Right cardiac atrium (tissue), 5 donors: ENCODE measurements at regions of chr6 and their contacts with region 1.

Region 1: GRCh38 chr6:42726485-42727086 is 4.2 kb upstream of the PRPH2 start:
- DNase-seq: peak; percentile 69 to 87 (median 69)
- ATAC-seq: peak; percentile 94
- H3K4me3 ChIP-seq: peak overlapping the region; percentile 56
- H3K27ac ChIP-seq: peak overlapping the region; percentile 58
- H3K4me1 ChIP-seq: no peaks in the 10 kb centered on the region
- H3K27me3 ChIP-seq: no peaks in the 10 kb centered on the region

Region 2: DNA sequence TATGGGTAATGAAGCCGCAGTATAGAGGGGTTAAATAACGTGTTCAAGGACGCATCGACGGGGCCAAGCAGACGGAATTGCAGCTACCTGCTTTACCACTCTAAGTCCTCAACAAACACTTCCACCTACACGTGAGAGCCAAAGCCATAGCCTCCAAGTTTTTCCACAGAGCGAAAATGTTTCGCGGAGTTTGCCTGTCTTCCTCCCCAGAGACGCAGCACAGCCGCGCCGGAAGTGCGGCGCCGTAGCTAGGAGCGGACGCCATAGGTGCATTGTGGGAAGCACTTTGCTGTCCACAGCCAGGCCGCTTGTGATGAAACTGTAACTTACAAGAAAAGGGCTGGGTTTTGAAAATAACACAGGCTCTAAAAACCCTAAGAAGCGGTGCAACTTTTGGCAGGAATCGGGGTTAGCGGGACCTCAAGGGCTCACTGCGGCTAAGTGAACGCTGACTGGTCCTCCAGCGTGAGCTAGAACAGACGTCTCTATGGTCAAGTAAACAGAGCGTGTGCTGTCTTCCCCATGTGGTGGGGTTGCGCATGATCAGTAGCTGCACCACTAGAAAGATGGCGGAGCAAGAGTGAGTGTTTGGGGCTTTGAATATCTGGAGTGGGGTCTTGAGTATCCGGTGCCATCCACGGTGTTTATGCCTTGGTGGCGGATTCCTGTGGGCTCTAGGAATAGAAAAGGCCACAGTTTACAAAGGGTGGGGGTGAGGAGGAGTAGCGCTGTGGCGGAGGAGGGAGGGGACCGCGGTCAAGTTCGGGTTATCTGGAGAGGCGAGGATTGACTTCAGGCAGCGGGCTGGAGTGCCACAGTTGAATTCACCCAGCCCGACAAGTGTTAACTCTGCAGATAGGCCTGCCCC is 153.0 kb after region 1 on chr6 and contains the start of gene RPL7L1:
- intact Hi-C with region 1: loop called in 1 of 4 experiments (anchors 10 kb)
- DNase-seq: peak; percentile 78 to 93 (median 92)
- ATAC-seq: peak; percentile 98
- H3K4me3 ChIP-seq: peak within 1 kb of the TSS; percentile 64
- H3K27ac ChIP-seq: peak within 1 kb of the TSS; percentile 86
- H3K4me1 ChIP-seq: no peaks in the 10 kb centered on the region
- H3K27me3 ChIP-seq: no peaks in the 10 kb centered on the region
- total RNA-seq, gene RPL7L1: 50.5 to 59.1 (median 51.7) TPM

Region 3: DNA sequence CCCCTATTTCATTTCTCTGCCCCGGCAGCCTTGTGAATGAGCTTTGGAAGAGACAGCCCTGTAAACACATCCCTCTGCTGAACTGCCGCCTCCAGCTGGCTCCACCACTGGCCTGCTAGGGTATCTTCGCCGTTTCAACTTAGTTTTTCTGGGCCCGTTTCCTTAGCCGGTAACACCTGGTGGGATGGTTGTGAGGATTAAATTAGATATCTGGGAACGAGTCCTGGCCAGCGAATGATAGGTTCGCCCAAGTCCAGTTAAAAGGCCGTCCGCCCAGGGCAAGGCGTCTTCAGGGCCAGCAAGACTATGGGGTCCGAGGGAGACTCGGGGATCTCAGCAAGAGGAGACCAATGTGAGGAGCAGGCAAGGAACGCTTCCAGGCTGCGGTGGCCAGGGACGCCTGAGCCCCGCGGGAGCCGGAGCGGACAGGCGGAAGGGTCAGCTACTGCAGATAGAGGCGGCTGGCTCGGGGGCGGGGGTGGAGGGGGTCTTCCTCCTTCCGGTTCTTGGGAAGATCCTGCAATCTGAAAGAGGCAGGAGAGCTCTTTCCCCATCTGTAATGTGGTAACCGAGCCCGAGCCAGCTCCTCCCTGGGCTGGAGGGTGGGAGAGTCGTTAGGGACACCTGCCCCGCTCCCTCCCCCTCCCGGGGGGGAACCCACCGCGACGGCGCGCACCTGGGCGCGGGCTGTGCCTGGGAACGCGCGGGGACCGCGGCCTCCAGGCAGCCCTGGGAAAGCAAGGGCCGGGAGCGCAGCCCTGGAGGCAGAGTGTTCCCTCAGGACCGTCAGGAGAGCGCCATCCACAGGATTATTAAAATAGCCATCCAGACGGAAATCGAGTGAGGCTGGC is 184.8 kb after region 1 on chr6:
- intact Hi-C with region 1: no loop called
- DNase-seq: no peak
- ATAC-seq: peak in 1 of 2 donors; percentile 30
- H3K4me3 ChIP-seq: peak overlapping the region; percentile 21
- H3K27ac ChIP-seq: no peak overlapping the region
- H3K4me1 ChIP-seq: no peaks in the 10 kb centered on the region
- H3K27me3 ChIP-seq: no peaks in the 10 kb centered on the region